A549 (cell line): ENCODE measurements at regions of chr16 and their contacts with region 1.

Region 1: DNA sequence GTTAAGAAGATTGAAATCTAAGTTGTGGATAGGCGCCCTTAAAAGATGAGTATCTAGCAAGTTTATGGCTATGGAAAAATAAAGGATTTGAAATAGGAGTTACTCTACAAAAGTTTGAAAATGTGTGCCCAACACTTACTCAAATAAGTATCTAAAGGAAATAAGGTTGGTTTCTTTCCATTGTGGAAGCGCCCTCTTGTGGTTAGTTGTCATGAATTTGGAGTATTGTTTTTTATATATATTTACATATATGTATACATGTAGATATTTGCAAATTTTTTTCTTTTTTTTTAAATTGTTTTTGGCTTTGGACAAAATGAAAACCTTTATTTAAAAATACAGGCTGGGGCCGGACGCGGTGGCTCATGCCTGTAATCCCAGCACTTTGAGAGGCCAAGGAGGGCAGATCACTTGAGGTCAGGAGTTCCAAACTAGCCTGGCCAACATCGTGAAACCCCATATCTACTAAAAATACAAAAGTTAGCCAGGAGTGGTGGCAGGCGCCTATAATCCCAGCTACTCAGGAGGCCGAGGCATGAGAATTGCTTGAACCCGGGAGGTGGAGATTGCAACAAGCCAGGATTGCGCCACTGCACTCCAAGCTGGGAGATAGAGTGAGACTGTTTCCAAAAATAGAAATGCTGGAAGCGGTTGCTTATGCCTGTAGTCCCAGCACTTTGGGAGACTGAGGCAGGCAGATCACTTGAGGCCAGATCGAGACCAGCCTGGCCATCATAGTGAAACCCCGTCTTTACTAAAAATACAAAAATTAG is 24.0 kb upstream of the VPS4A start:
- DNase-seq: peak; percentile 25 to 70
- ATAC-seq: peak in 1 of 2 experiments; percentile 64; a peak in 3 of 6 replicates
- H3K4me3 ChIP-seq: no peak overlapping the region
- H3K27ac ChIP-seq: peak overlapping the region in 1 of 2 experiments; percentile 38; a peak in 1 of 6 replicates
- H3K4me1 ChIP-seq: peaks cover 12% of the 10 kb centered on the region; the same call in 2 of the 3 replicates
- CTCF ChIP-seq: peak; percentile 91
- EP300 ChIP-seq: no peak
- POLR2A ChIP-seq: no peak
- RAD21 ChIP-seq: peak; percentile 68 to 78

Region 2: DNA sequence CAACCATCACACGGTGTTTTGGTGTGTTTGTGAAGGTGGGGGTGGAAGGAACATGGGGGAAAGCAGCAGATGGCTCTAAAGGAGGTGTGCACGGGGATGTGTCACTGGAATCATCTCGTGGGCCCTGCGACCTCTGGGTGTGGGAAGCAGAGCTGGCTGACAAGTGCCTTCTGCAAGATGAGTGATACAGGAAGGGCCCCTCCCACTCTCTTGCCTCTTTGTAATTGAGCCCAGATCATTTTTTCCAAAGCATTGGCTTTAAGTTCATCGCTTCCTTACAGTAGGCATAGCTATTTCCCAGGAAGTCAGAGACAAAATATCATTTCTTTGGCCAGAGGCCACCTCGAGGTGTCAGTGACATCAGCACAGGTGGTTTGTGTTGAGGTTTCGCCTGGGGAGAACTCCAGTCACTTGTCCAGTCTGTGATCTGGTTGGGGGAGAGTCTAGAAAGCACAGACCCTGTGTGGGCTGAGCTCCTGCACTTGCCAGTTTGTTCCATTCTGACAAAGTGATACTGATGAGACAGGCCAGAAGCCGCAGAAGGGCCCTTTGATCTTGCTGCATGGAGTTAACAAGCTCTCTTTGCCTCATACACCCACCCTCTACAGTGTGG is 120.8 kb before region 1 on chr16:
- CTCF ChIA-PET with region 1: interaction called, 20 read pairs
- POLR2A ChIA-PET with region 1: no interaction called
- DNase-seq: no peak
- ATAC-seq: no peak
- H3K4me3 ChIP-seq: no peak overlapping the region
- H3K27ac ChIP-seq: no peak overlapping the region
- H3K4me1 ChIP-seq: no peaks in the 10 kb centered on the region
- CTCF ChIP-seq: no peak
- EP300 ChIP-seq: no peak
- POLR2A ChIP-seq: no peak
- RAD21 ChIP-seq: no peak

Region 3: GRCh38 chr16:69186642-69187445 is 100.3 kb before region 1 on chr16 and contains the start of gene SNTB2:
- CTCF ChIA-PET with region 1: interaction called, 32 read pairs
- POLR2A ChIA-PET with region 1: interaction called, 5 read pairs
- DNase-seq: peak; percentile 87 to 90
- ATAC-seq: peak; percentile 92 to 95
- H3K4me3 ChIP-seq: peak within 1 kb of the TSS; percentile 74
- H3K27ac ChIP-seq: peak within 1 kb of the TSS; percentile 86 to 97
- H3K4me1 ChIP-seq: peaks cover 34% of the 10 kb centered on the region
- CTCF ChIP-seq: no peak
- EP300 ChIP-seq: no peak
- POLR2A ChIP-seq: peak; percentile 93
- RAD21 ChIP-seq: no peak
- polyA plus RNA-seq, gene SNTB2: 19.2 and 20.8 TPM in 2 replicates

Region 4: DNA sequence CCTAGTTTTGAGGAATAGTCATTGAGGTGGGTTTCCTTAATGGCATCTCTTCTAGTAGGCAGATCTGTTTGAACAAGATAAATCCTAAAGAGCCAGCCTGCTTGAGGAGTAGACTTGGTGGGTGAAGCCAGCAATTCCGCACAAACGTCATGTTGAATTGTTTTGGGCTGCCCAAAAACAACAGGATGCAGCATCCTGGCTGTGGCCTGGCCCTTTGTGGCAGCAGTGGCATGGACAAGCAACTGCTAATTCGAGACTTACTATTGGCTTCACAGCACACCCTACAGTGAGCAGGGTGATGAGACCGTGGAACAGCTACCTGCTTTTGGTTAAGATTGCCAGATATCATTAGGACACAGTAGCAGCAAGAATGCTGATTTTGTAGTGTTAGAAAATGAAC is 14.7 kb after region 1 on chr16:
- CTCF ChIA-PET with region 1: interaction called, 19 read pairs
- POLR2A ChIA-PET with region 1: no interaction called
- DNase-seq: no peak
- ATAC-seq: no peak
- H3K4me3 ChIP-seq: no peak overlapping the region
- H3K27ac ChIP-seq: no peak overlapping the region
- H3K4me1 ChIP-seq: no peaks in the 10 kb centered on the region
- CTCF ChIP-seq: no peak
- EP300 ChIP-seq: no peak
- POLR2A ChIP-seq: no peak
- RAD21 ChIP-seq: no peak